Activated naive CD4-positive, alpha-beta T cell treated with anti-CD3 and anti-CD28 coated beads for 36 hours (primary cell): ENCODE measurements at regions of chr1 and their contacts with region 1.

Region 1: DNA sequence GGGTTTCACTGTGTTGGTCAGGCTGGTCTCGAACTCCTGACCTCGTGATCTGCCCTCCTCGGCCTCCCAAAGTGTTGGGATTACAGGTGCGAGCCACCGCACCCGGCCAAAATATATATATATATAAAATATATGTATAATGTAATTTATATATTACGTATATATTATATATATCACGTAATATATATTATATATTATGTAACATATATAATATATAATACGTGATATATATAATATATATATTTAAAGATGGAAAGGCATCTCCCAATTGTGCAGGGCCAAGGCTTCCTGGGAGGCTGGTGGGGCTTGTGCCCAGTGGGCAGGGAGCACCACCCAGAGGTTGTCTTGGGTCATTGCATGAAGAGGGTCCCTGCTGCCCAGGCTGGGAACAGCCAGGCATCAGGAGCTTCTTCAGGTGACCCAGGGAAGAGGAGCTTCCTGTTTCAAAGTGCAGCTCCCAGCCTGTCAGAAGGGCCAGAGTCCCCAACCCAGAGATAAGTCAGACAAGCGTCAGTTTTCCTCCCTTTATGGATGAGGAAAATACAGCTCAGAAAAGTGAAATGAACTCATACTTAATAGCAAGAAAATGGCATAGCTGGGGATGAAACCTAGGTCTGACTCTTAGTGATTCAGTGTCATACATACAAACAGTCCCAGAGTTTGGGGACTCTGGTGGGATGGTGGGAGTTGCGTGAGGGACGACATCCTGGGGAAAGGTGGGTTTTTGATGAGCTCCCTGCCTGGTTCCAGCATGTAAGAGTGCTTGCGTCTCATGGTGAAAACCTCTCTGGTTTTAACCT is 12.0 kb downstream of the UBE2Q1 start:
- DNase-seq: peak; percentile 77
- H3K4me3 Mint-ChIP-seq: no peak overlapping the region
- H3K27ac Mint-ChIP-seq: no peak overlapping the region
- H3K4me1 Mint-ChIP-seq: peaks cover 21% of the 10 kb centered on the region
- H3K27me3 Mint-ChIP-seq: no peaks in the 10 kb centered on the region

Region 2: DNA sequence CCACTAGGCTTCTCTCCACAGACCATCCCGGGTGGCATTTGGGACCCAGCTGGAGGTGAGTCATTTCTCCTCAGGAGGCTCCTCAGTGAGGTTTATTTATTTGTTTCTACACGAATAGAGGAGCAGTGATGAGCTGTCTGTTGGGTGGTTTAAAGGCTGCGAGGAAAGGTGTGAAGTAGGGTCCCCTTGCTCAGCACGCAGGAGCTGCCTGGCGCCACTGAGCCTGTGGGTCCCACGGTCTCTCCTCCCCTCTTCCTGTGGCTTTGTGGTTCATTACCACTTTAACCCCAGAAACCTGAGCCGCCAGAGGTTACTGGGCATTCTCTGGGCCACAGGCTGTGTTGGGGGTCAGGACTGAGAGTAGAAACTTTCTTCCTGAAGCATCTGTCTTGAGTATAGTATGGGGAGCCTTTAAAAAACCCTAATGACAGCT is 101.4 kb before region 1 on chr1:
- CTCF ChIA-PET with region 1: no interaction called
- intact Hi-C with region 1: no loop called
- DNase-seq: peak; percentile 56
- H3K4me3 Mint-ChIP-seq: no peak overlapping the region
- H3K27ac Mint-ChIP-seq: peak overlapping the region; percentile 56
- H3K4me1 Mint-ChIP-seq: peaks cover 52% of the 10 kb centered on the region
- H3K27me3 Mint-ChIP-seq: no peaks in the 10 kb centered on the region

Region 3: DNA sequence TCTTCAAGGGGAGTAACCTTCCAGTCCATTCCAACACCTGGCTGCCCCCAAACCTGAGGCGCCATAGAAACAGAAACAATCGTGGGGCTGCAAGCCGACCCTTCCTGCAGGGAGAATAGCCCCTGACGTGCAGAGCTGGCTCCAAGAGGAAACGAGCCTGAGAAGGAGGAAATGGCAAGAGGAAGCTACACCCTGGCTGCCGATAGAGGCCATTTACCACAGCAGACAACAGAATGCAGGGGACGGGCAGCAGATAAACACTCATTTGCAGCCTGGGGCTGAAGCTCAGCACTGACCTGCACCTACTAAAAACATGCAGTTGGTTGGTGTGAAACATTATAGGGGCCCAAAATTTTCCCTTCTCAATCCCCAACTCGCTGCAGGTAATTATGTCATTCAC is 53.2 kb before region 1 on chr1:
- CTCF ChIA-PET with region 1: interaction called, 11 read pairs
- intact Hi-C with region 1: no loop called
- DNase-seq: peak; percentile 35
- H3K4me3 Mint-ChIP-seq: peak overlapping the region; percentile 17
- H3K27ac Mint-ChIP-seq: no peak overlapping the region
- H3K4me1 Mint-ChIP-seq: peaks cover 38% of the 10 kb centered on the region
- H3K27me3 Mint-ChIP-seq: peaks cover 4% of the 10 kb centered on the region